Activated CD4-positive, alpha-beta memory T cell treated with anti-CD3 and anti-CD28 coated beads for 36 hours (primary cell): ENCODE measurements at regions of chr19 and their contacts with region 1.

Region 1: GRCh38 chr19:43562698-43563241 is 12.6 kb downstream of the XRCC1 start:
- DNase-seq: peak; percentile 86
- H3K4me3 Mint-ChIP-seq: peak overlapping the region; percentile 40
- H3K27ac Mint-ChIP-seq: peak overlapping the region; percentile 95
- H3K4me1 Mint-ChIP-seq: peaks cover 38% of the 10 kb centered on the region
- H3K27me3 Mint-ChIP-seq: no peaks in the 10 kb centered on the region

Region 2: GRCh38 chr19:43545981-43546380 is 16.8 kb before region 1 on chr19:
- CTCF ChIA-PET with region 1: no interaction called
- POLR2A ChIA-PET with region 1: no interaction called
- intact Hi-C with region 1: no loop called
- DNase-seq: no peak
- H3K4me3 Mint-ChIP-seq: no peak overlapping the region
- H3K27ac Mint-ChIP-seq: no peak overlapping the region
- H3K4me1 Mint-ChIP-seq: no peaks in the 10 kb centered on the region
- H3K27me3 Mint-ChIP-seq: no peaks in the 10 kb centered on the region

Region 3: GRCh38 chr19:43575156-43575950 is 12.6 kb after region 1 on chr19 and contains the starts of genes PINLYP and XRCC1:
- CTCF ChIA-PET with region 1: interaction called, 5 read pairs
- POLR2A ChIA-PET with region 1: interaction called, 5 read pairs
- intact Hi-C with region 1: loop called (anchors 1 kb)
- DNase-seq: peak; percentile 98
- H3K4me3 Mint-ChIP-seq: peak within 1 kb of the TSS; percentile 96
- H3K27ac Mint-ChIP-seq: peak within 1 kb of the TSS; percentile 86
- H3K4me1 Mint-ChIP-seq: peaks cover 24% of the 10 kb centered on the region
- H3K27me3 Mint-ChIP-seq: no peaks in the 10 kb centered on the region
- total RNA-seq, gene PINLYP: 2.2 to 3.7 TPM
- total RNA-seq, gene XRCC1: 42.5 to 43.0 TPM

Region 4: DNA sequence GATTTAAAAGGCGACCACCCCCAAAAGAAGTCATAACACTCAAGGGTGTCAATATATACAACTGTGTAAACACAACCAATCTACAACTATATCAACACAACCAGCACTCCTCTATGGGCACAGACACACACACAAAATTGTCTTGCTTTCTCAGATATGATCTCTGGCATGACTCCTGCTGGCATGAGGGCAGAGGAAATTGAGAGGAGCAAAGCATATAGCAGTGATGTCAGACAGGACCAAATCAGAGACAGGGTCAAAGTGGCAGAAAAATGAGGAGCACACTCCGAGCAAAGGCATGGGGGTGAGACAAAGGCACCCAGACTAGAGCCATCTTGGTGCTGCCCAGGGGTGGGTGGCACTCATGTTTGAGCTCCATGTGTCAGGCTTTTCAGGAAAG is 23.6 kb after region 1 on chr19:
- CTCF ChIA-PET with region 1: no interaction called
- POLR2A ChIA-PET with region 1: no interaction called
- intact Hi-C with region 1: no loop called
- DNase-seq: no peak
- H3K4me3 Mint-ChIP-seq: no peak overlapping the region
- H3K27ac Mint-ChIP-seq: no peak overlapping the region
- H3K4me1 Mint-ChIP-seq: peaks cover 17% of the 10 kb centered on the region
- H3K27me3 Mint-ChIP-seq: no peaks in the 10 kb centered on the region

Region 5: GRCh38 chr19:43619262-43620060 is 56.7 kb after region 1 on chr19 and contains the start of gene ZNF428:
- CTCF ChIA-PET with region 1: no interaction called
- POLR2A ChIA-PET with region 1: no interaction called
- intact Hi-C with region 1: loop called (anchors 2 kb)
- DNase-seq: peak; percentile 92
- H3K4me3 Mint-ChIP-seq: peak within 1 kb of the TSS; percentile 97
- H3K27ac Mint-ChIP-seq: peak within 1 kb of the TSS; percentile 98
- H3K4me1 Mint-ChIP-seq: peaks cover 14% of the 10 kb centered on the region
- H3K27me3 Mint-ChIP-seq: no peaks in the 10 kb centered on the region
- total RNA-seq, gene ZNF428: 11.7 to 12.5 TPM